PC-3 (cell line): ENCODE measurements at regions of chr2 and their contacts with region 1.

Region 1: DNA sequence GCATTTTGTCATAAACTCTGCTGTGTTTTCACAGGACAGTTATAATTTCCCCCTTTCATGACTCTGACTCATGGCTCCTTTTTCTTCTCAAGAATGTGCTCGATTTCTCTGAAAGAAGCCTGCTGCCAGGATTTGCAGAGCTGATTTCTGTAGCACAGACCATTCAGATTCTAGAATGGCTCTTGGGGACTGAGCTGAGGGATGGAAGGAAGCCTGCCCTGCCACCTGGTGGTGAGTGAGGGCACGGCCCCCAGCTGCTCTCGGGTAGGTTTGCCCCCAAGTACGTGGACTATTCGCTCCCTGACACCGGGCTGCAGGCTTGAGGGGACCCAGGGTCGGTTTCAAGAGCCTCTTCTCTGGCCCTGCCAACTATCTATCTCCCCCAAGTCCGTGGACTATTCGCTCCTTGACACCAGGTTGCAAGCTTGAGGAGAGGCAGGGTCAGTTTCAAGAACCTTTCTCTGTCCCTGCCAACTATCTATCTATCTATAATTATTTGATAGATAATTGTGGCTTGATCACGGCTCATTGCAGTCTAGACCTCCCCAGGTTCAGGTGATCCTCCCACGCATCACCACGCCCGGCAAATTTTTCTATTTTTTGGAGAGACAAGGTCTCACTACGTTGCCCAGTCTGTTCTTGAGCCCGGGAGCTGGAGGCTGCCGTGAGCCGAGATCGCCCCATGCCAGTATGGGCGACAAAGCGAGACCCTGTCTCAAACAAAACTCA is 1.4 kb upstream of the SMYD5 start:
- DNase-seq: peak; percentile 76
- ATAC-seq: peak; percentile 80
- H3K4me3 ChIP-seq: no peak overlapping the region
- H3K27ac ChIP-seq: no peak overlapping the region
- H3K4me1 ChIP-seq: peaks cover 15% of the 10 kb centered on the region
- H3K27me3 ChIP-seq: no peaks in the 10 kb centered on the region
- CTCF ChIP-seq: peak; percentile 90

Region 2: DNA sequence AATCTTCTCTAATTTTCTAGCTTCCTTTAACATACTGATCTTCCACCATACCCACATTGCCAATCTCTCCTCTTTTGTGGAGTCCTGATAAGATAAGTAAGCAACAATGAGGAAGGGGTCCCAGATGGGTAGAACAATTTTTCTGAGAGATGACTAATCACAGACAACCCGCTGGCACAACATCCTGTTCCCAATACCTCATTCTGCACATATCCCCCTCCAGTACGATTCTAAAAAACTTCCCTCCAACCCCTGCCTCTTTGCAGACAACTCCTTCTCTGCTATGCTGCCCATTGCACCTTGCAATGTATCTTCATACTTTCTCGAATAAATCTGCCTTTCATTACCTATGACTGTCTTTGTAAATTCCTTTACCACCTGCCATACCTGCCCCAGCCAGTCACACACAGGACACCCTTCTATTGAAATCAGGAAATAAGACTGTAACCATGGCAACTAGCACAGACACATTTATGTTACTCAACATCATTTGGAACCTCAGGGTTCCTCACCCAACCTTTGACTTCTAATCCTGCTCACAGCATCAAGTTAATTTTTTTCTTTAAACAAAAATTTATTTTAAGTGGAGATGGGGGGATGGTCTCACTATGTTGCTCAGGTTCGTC is 379.4 kb before region 1 on chr2:
- CTCF ChIA-PET with region 1: no interaction called
- POLR2A ChIA-PET with region 1: no interaction called
- intact Hi-C with region 1: no loop called
- DNase-seq: no peak
- ATAC-seq: no peak
- H3K4me3 ChIP-seq: no peak overlapping the region
- H3K27ac ChIP-seq: no peak overlapping the region
- H3K4me1 ChIP-seq: peaks cover 13% of the 10 kb centered on the region
- H3K27me3 ChIP-seq: no peaks in the 10 kb centered on the region
- CTCF ChIP-seq: no peak

Region 3: GRCh38 chr2:73187549-73187948 is 25.1 kb before region 1 on chr2:
- CTCF ChIA-PET with region 1: no interaction called
- POLR2A ChIA-PET with region 1: interaction called, 24 read pairs
- intact Hi-C with region 1: no loop called
- DNase-seq: no peak
- ATAC-seq: no peak
- H3K4me3 ChIP-seq: no peak overlapping the region
- H3K27ac ChIP-seq: no peak overlapping the region
- H3K4me1 ChIP-seq: no peaks in the 10 kb centered on the region
- H3K27me3 ChIP-seq: peaks cover 15% of the 10 kb centered on the region
- CTCF ChIP-seq: no peak

Region 4: GRCh38 chr2:73233154-73233931 is 20.7 kb after region 1 on chr2 and contains the start of gene PRADC1:
- CTCF ChIA-PET with region 1: interaction called, 3 read pairs
- POLR2A ChIA-PET with region 1: no interaction called
- intact Hi-C with region 1: loop called (anchors 1 kb)
- DNase-seq: peak; percentile 99
- ATAC-seq: peak; percentile 89
- H3K4me3 ChIP-seq: peak within 1 kb of the TSS; percentile 94
- H3K27ac ChIP-seq: peak within 1 kb of the TSS; percentile 41
- H3K4me1 ChIP-seq: peaks cover 15% of the 10 kb centered on the region
- H3K27me3 ChIP-seq: no peaks in the 10 kb centered on the region
- CTCF ChIP-seq: no peak
- total RNA-seq, gene PRADC1: 62.5 and 65.7 TPM in 2 replicates

Region 5: DNA sequence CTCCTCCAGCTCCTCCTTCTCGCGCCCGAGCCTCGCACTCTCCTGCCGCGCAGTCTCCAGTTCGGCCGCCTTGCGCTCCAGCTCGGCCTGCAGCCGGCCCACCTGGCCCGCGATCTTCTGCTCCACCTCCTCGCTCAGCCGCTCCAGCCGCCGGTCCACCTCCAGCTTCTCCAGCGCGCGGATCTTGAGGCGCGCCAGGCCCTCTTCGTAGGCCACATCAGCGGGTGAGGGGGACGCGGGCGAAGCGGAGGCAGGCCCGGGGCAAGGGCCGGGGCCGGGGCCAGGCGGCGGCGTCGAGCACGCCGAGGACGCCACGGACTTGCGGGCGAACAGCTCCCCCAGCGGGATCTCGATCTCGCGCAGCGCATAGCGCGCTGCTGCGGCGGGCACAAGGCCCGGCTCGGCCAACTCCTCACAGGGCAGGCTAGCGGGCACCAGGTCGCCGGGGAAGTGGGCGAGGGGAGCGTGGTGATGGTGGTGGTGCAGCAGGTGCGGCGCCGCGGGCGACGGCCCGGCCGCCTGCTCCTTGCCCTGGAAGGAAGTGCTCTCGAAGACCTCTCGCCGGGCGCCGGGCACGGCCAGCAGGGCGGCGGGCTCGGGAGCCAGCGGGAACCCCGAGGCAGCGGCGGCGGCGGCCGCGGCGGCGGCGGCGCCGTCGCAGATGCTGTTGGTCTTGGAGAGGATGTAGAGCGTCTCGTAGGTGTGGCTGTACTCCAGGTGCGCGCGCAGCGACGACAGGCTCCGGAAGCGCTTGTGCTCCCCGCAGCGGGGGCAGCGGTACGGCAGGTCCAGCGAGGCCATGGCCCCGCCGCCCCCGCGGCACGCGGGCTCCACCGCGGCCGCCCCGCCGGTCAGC is 56.4 kb after region 1 on chr2:
- CTCF ChIA-PET with region 1: no interaction called
- POLR2A ChIA-PET with region 1: no interaction called
- intact Hi-C with region 1: no loop called
- DNase-seq: peak; percentile 60
- ATAC-seq: peak; percentile 69
- H3K4me3 ChIP-seq: peak overlapping the region; percentile 59
- H3K27ac ChIP-seq: no peak overlapping the region
- H3K4me1 ChIP-seq: 0 out of 2 replicates have a peak, but pooled peaks cover 4% of the 10 kb centered on the region
- H3K27me3 ChIP-seq: no peaks in the 10 kb centered on the region
- CTCF ChIP-seq: peak; percentile 10; the same call in 1 of the 2 replicates